Dorsolateral prefrontal cortex (tissue), 120 donors: ENCODE measurements at regions of chr10 and their contacts with region 1.

Region 1: DNA sequence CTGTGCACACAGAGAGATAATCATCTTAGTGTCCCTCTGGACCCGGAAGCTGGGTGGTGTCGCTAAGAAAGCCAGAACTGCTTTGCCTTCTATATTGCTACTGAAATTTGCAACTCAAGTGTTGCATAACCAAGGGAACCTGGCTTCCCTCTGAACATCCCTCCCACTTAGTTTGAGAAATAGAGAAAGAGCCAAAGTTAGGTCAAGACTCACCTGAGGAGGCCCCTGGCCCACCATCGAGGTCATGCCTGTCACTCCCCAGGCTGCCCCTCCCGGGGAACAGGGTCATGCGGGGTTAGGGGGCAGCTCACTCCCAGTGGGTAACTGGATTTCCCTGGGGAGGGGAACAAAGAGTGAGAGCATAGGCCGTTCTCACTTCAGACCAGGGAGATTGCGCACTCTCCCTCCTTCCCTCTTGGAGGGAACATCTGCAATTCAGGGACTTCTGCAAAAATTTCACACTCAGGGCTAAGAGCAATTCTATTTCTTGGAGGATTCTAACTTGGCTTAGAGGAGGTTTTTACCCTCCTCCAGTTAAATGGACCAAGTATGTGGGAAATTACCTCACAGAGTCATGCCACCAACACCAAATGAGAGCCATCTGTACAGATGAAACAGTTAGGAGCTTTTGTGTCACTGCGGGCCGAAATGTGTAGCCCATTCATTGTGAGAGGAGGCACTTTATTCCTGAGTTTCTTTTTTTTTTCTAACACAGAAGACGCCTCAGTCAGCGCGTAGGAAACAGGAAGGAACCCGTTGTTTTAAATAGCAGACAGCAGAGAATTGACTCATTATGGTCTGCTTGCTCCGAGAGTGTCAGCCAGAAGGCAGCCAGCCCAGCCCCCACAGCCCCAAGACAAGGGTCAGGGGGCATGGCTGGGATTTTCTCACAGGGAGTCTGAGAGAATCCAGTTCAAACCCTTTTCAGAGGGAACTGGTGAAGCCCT is 221.3 kb downstream of the ARHGAP12 start:
- DNase-seq: peak in 6 of 10 donors; percentile 40 to 65 (median 60)
- H3K4me3 ChIP-seq: peak overlapping the region in 54 of 59 donors; percentile 1 to 53 (median 28)
- H3K27ac ChIP-seq: peak overlapping the region in 57 of 59 donors; percentile 0 to 91 (median 76)
- H3K27me3 ChIP-seq: no peaks in the 10 kb centered on the region
- CTCF ChIP-seq: no peak

Region 2: DNA sequence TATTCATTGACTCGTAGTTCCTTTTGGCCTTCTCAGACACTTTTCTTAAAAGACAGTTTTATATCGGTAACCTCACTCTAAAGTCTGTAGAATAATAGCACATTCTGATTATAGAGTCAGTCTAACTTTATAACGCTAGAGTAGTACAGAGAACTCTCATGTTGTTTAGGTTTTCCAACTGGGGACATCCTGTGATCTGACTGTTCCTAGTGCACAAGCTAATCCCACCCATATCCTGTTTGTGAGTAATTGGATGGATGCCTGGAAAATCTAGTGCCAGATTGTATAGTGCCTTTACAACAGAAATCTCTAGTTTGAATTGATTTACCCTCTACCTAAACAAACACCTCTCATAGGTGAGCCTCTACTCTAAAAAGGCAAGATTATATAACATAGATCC is 281.0 kb before region 1 on chr10:
- intact Hi-C with region 1: no loop called
- DNase-seq: no peak
- H3K4me3 ChIP-seq: no peak overlapping the region
- H3K27ac ChIP-seq: peak overlapping the region in 10 of 59 donors; percentile 1 to 49 (median 21)
- H3K27me3 ChIP-seq: no peaks in the 10 kb centered on the region
- CTCF ChIP-seq: no peak

Region 3: DNA sequence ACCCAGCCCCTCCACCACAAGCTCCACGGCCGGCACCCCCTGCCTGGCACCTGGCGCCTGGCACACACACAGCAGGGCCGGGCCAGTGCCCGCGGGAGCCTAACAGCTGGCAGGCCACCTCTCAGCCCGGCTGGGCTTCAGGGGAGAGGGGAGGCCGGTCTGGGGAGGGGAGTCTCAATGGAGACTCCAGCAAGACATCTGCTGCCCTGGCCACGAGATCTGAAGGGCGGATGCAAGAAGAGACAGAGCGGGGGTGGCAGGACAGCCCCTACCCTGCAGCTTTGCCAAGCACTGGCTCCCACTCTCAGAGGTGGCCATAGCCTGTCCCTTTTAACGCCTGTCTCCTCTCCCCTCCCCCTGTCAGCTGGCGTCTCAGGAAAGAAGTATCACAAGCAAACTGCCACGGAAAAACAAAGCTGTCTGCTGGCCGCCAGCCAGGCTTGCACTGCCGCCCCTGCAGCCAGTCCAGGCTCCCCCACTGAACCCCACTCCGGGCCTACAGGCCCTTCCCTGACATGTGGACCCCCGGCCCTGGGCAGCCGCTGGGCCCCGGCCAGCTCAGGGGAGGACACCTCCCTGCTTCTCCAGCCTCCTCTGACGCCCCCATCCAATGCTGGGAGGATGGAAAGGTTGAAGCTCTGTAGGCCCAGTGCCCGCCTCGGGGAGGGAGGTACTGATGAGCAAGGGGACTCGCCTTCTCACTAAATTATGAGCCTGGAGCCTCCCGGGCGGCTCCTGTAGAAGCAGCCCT is 42.8 kb after region 1 on chr10:
- intact Hi-C with region 1: loop called in 1 of 2 experiments (anchors 2 kb)
- DNase-seq: peak in 6 of 10 donors; percentile 44 to 59 (median 55)
- H3K4me3 ChIP-seq: peak overlapping the region in 27 of 59 donors; percentile 0 to 35 (median 17)
- H3K27ac ChIP-seq: peak overlapping the region in 54 of 59 donors; percentile 2 to 87 (median 64)
- H3K27me3 ChIP-seq: no peaks in the 10 kb centered on the region
- CTCF ChIP-seq: no peak